ENCODE measurements at regions of chr1 and their contacts with region 1.

Region 1: DNA sequence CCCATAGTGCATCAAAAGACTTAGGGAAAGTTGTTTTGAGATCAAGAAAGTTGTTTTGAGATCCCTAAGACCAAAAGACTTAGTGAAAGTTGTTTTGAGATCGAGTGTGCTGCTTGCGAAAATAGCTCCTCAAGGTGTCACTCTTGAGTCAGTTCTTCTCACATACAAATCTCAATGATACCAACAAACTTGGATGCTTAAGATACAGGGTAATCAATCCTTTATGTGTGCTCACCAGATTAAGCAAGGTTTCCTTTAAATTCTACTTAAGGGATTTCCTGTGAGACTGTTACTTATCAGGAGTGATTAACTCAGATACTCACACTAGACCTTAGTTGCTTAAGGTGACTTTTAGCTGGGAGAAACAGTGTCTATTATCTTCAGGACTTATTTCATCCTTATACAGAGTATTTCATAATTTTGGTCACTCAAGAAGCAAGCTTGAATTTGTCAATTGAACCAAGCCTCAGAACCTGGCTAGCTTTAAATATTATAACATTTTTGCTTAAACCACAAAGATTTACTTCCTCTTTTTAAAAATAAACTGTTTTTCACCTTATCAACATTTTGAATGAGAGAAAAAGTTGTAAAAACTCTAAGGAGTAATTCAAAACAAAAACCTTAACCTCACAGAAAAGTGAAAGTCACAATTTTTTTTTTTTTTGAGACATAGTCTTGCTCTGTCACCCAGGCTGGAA is 8.0 kb upstream of the RLF start:
- DNase-seq: no peak
- H3K4me3 ChIP-seq: peak overlapping the region in 9 of 59 donors; percentile 0 to 32 (median 12)
- H3K27ac ChIP-seq: peak overlapping the region in 1 of 59 donors; percentile 26
- H3K27me3 ChIP-seq: no peaks in the 10 kb centered on the region
- CTCF ChIP-seq: peak; percentile 36 to 89 (median 70)

Region 2: GRCh38 chr1:40096977-40097782 is 56.0 kb before region 1 on chr1 and contains the start of gene PPT1:
- intact Hi-C with region 1: loop called in 1 of 2 experiments (anchors 10 kb)
- DNase-seq: peak; percentile 79 to 92 (median 87)
- H3K4me3 ChIP-seq: peak within 1 kb of the TSS; percentile 58 to 97 (median 81)
- H3K27ac ChIP-seq: peak within 1 kb of the TSS; percentile 66 to 97 (median 85)
- H3K27me3 ChIP-seq: no peaks in the 10 kb centered on the region
- CTCF ChIP-seq: peak in 52 of 56 donors; percentile 7 to 66 (median 40)
- total RNA-seq, gene PPT1: 72.4 to 166 (median 118) TPM

Region 3: GRCh38 chr1:40241362-40241761 is 88.1 kb after region 1 on chr1:
- intact Hi-C with region 1: no loop called
- DNase-seq: no peak
- H3K4me3 ChIP-seq: no peak overlapping the region
- H3K27ac ChIP-seq: no peak overlapping the region
- H3K27me3 ChIP-seq: no peaks in the 10 kb centered on the region
- CTCF ChIP-seq: no peak

Region 4: DNA sequence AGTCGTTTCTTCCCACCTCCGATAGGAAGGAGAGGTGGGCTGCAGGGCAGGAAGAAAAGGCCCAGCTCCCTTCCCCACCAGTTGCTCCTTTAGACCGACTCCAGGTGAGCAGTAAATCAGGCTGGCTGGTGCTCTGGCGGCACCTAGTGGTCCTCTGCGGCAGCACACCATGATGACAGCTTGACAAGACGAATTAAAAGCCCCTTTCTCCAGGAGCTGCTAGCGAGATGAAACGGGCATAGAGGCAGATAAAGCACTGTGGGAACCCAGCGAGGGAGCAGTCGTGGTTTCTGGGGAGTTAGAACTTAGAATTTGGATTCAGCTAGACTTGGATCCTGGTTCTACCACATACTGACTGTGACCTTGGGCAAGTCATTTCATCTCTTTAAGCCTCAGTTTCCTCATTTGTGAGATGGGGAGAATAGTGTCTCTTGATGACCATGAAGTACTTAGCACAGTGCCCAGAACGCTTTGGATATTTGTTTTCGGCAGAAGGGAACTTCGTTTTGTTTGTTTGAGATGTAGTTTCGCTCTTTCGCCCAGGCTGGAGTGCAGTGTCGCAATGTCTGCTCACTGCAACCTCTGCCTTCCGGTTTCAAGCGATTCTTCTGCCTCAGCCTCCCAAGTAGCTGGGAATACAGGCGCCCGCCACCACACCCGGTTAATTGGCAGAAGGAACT is 185.7 kb after region 1 on chr1:
- intact Hi-C with region 1: loop called (anchors 2 to 5 kb)
- DNase-seq: peak; percentile 61 to 89 (median 77)
- H3K4me3 ChIP-seq: peak overlapping the region in 18 of 59 donors; percentile 1 to 49 (median 14)
- H3K27ac ChIP-seq: peak overlapping the region in 3 of 59 donors; percentile 17 to 62 (median 59)
- H3K27me3 ChIP-seq: no peaks in the 10 kb centered on the region
- CTCF ChIP-seq: peak; percentile 79 to 99 (median 94)

Region 5: DNA sequence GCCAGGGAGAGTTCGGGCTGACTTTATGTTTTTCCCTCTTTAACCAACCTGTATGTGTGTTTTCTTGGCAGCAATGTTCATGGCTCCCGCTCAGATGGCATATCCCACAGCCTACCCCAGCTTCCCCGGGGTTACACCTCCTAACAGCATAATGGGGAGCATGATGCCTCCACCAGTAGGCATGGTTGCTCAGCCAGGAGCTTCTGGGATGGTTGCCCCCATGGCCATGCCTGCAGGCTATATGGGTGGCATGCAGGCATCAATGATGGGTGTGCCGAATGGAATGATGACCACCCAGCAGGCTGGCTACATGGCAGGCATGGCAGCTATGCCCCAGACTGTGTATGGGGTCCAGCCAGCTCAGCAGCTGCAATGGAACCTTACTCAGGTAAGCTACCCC is 263.5 kb after region 1 on chr1:
- intact Hi-C with region 1: no loop called
- DNase-seq: no peak
- H3K4me3 ChIP-seq: no peak overlapping the region
- H3K27ac ChIP-seq: no peak overlapping the region
- H3K27me3 ChIP-seq: no peaks in the 10 kb centered on the region
- CTCF ChIP-seq: no peak